ENCODE measurements at regions of chr9 and their contacts with region 1.

Region 1: GRCh38 chr9:37913480-37914153 is 9.7 kb upstream of the SLC25A51 start:
- DNase-seq: peak; percentile 86 to 89 (median 88)
- H3K4me3 ChIP-seq: no peak overlapping the region
- H3K4me3 Mint-ChIP-seq: no peak overlapping the region
- H3K27ac ChIP-seq: peak overlapping the region; percentile 10 to 63
- H3K27ac Mint-ChIP-seq: peak overlapping the region; percentile 68 to 95 (median 87)
- H3K4me1 ChIP-seq: peaks cover 30 to 34% of the 10 kb centered on the region in 2 donors
- H3K4me1 Mint-ChIP-seq: peaks cover 34% of the 10 kb centered on the region
- H3K27me3 ChIP-seq: no peaks in the 10 kb centered on the region
- H3K27me3 Mint-ChIP-seq: no peaks in the 10 kb centered on the region
- CTCF ChIP-seq: peak; percentile 97

Region 2: GRCh38 chr9:37540634-37541033 is 373.0 kb before region 1 on chr9:
- intact Hi-C with region 1: no loop called
- DNase-seq: no peak
- H3K4me3 ChIP-seq: no peak overlapping the region
- H3K4me3 Mint-ChIP-seq: no peak overlapping the region
- H3K27ac ChIP-seq: no peak overlapping the region
- H3K27ac Mint-ChIP-seq: no peak overlapping the region
- H3K4me1 ChIP-seq: no peaks in the 10 kb centered on the region
- H3K4me1 Mint-ChIP-seq: no peaks in the 10 kb centered on the region
- H3K27me3 ChIP-seq: no peaks in the 10 kb centered on the region
- H3K27me3 Mint-ChIP-seq: peaks cover 0 to 4% (median 2%) of the 10 kb centered on the region in 3 donors
- CTCF ChIP-seq: no peak

Region 3: DNA sequence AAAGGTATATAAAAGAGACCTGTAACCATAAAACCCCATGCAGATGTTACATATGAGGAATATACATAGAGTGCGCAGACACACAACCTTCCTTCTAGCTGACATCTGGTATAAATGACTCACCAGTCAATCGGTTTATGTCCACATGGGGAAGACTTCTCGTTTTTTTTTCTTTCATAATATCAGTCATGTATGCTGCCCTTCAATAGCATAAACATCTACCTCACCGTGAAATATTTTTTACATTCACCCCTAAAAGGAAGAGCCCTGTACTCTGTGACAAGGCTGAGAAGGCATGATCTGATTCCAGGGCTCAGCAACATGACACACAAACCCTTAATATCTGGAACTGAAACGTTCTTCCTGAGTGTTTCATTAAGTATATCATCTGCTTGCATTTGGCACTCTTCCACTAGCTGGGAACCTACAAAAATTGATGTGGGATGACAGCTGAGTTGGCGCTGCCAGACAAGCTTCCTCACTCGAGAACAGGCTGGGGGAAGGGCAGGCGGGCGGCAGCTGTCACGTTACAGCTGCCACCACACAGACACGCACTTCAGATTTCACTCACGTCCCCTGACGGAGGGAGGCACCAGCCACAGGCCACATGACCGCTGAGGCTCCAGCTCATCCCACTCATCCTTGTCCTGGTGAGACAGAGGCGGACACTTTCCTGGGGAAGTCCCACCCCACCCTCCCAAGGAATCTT is 81.2 kb after region 1 on chr9:
- intact Hi-C with region 1: loop called in 1 of 2 experiments (anchors 5 kb)
- DNase-seq: peak; percentile 95 to 98 (median 95)
- H3K4me3 ChIP-seq: peak overlapping the region in 1 of 3 experiments; percentile 41
- H3K4me3 Mint-ChIP-seq: peak overlapping the region; percentile 67 to 83
- H3K27ac ChIP-seq: peak overlapping the region; percentile 85 to 97
- H3K27ac Mint-ChIP-seq: peak overlapping the region; percentile 97 to 99 (median 99)
- H3K4me1 ChIP-seq: peaks cover 74% of the 10 kb centered on the region in 2 donors
- H3K4me1 Mint-ChIP-seq: peaks cover 81% of the 10 kb centered on the region
- H3K27me3 ChIP-seq: no peaks in the 10 kb centered on the region
- H3K27me3 Mint-ChIP-seq: peaks cover 0 to 3% (median 0%) of the 10 kb centered on the region in 3 donors
- CTCF ChIP-seq: no peak

Region 4: DNA sequence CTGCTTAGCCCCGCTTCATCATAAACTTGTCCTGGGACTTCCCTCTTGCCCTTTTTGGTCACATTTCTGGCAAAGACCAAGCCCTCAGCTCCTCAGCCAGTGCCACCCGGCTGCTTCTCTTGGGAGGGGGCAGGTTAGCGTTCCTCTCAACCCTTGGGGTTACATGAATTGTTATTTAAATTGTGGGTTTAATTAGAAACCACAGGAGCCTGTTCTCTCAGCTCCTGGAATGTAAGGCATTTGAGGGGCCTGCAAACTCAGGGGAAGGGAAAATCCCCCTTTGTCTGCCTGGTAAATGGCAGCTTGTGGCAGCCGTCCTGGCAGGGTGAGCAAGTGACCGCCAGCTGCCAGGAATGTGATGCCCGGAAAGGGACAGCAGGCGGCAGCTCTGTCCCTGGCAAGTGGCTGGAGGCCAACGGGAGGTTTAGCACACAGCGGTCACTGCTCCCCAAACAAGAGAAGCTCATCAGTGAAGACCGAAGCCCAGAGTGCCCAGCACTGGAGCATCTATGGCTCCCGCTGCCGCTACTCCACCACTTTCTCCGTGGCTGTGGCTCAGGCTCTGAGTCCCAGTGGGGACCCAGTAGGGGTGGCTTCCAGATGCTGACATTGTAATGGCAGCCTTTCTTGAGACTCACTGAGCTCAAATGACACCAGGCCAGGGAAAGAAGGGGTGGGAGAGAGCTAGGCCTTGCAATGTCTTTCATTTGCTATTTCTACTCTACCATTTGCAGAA is 103.7 kb after region 1 on chr9:
- intact Hi-C with region 1: loop called in 1 of 2 experiments (anchors 10 kb)
- DNase-seq: no peak
- H3K4me3 ChIP-seq: no peak overlapping the region
- H3K4me3 Mint-ChIP-seq: no peak overlapping the region
- H3K27ac ChIP-seq: no peak overlapping the region
- H3K27ac Mint-ChIP-seq: no peak overlapping the region
- H3K4me1 ChIP-seq: peaks cover 14 to 15% of the 10 kb centered on the region in 2 donors
- H3K4me1 Mint-ChIP-seq: peaks cover 14% of the 10 kb centered on the region
- H3K27me3 ChIP-seq: no peaks in the 10 kb centered on the region
- H3K27me3 Mint-ChIP-seq: peaks cover 0 to 6% (median 0%) of the 10 kb centered on the region in 3 donors
- CTCF ChIP-seq: no peak

Region 5: DNA sequence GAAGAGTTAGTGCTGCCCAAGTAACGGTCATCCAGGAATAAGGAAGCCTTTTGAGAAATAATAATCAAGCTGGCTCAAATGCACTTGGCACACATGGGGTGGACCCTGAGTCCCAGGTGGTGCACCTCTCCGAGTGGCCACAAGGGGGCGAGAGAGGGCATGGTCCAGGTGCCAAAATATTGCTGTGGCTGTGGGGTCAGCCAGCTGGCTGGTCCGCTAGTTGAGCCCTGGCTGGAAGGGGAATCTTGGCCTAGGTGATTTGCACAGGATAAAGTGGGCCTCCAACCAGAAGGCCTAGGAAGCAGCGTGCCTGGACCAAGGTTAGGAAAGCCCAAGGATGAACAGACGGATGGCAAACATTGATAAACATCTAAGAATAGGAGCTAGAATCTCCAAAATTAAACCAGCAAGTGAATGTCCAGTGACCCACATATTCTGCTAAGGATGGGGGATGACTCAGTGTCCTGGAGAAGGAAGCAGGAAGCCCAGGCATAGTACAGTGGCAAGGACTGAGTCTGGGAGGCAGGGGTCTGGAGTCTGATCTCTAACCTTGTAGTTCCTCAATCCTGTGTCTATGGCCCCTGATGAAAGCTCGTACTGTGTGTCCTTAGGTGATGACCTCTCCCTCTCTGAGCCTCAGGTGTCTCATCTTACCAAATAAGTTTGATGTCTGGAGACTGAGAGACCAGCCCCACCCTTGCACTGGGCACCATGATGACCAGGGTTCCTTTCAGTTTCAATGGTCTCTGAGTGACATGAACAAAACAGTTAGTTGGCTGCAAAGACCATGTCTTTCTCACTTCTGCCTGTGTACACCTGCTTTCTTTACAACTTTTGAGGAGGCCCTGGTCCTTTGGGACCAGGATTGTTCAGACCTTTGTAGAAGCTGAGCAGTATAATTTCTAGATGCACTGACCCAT is 174.6 kb after region 1 on chr9:
- intact Hi-C with region 1: loop called (anchors 5 kb)
- DNase-seq: peak in 2 of 3 donors; percentile 61
- H3K4me3 ChIP-seq: no peak overlapping the region
- H3K4me3 Mint-ChIP-seq: no peak overlapping the region
- H3K27ac ChIP-seq: no peak overlapping the region
- H3K27ac Mint-ChIP-seq: no peak overlapping the region
- H3K4me1 ChIP-seq: peaks cover 19 to 26% of the 10 kb centered on the region in 2 donors
- H3K4me1 Mint-ChIP-seq: peaks cover 43% of the 10 kb centered on the region
- H3K27me3 ChIP-seq: no peaks in the 10 kb centered on the region
- H3K27me3 Mint-ChIP-seq: peaks cover 0 to 2% (median 2%) of the 10 kb centered on the region in 3 donors
- CTCF ChIP-seq: peak; percentile 98

Region 6: DNA sequence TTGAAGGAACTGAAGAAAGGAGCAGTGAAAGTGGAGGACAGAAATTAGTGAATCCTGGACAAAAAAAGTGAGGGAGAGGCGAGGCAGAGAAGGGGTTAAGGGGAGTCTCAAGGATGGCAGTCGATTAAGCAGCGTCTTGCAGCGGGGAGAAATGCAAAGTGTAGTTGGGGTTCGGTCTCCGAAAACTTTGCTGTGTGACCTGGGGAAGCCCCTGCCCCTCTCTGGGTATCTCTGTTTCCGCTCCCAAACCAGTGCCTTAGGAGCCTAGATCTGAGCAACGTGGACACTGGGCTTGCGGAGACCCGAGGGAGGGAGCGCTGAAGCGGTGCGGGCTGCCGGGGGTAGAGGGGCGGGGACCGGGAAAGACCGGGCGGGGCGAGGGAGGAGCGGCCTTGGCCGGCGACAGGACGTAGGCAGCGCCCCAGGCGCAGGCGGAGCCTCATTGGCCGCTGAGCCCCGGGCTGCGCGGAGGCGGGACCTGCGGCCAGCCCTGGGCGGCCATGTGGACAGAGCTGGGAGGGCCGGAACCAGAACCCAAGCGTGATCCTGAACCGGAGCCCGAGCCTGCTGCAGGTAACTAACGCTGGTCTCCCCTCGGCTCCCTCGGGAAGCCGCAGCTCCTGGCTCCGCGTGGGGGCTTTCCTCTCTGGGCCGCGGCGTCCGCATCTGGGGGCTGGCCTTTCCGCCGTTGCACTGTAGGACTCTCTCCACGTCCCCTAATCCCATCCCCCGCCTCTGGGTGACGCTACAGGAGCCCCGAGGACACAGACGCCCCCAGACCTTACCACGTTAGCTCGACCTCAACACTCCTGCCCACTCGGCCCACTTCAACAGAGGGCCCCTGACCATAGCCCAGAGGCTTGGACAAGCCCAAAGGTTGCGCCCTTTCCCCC is 478.9 kb after region 1 on chr9 and contains the start of gene ALDH1B1:
- intact Hi-C with region 1: loop called in 1 of 2 experiments (anchors 10 kb)
- DNase-seq: peak; percentile 64 to 85 (median 73)
- H3K4me3 ChIP-seq: peak within 1 kb of the TSS; percentile 54 to 83 (median 63)
- H3K4me3 Mint-ChIP-seq: peak within 1 kb of the TSS; percentile 94 to 97
- H3K27ac ChIP-seq: peak within 1 kb of the TSS in 1 of 2 donors; percentile 64
- H3K27ac Mint-ChIP-seq: peak within 1 kb of the TSS; percentile 76 to 93 (median 84)
- H3K4me1 ChIP-seq: peaks cover 10 to 15% of the 10 kb centered on the region in 2 donors
- H3K4me1 Mint-ChIP-seq: peaks cover 18% of the 10 kb centered on the region
- H3K27me3 ChIP-seq: no peaks in the 10 kb centered on the region
- H3K27me3 Mint-ChIP-seq: peaks cover 2 to 10% (median 8%) of the 10 kb centered on the region in 3 donors
- CTCF ChIP-seq: no peak
- polyA plus RNA-seq, gene ALDH1B1: 1.00 to 4.5 (median 3.8) TPM

Measured in CD14-positive monocyte (primary cell).